PC-3 (cell line): ENCODE measurements at regions of chr3 and their contacts with region 1.

Region 1: GRCh38 chr3:9932843-9933560 is 632 bp upstream of the CRELD1 start:
- DNase-seq: peak; percentile 84
- ATAC-seq: peak; percentile 71
- H3K4me3 ChIP-seq: peak overlapping the region; percentile 72
- H3K27ac ChIP-seq: peak overlapping the region; percentile 84
- H3K4me1 ChIP-seq: peaks cover 33% of the 10 kb centered on the region
- H3K27me3 ChIP-seq: no peaks in the 10 kb centered on the region
- CTCF ChIP-seq: peak; percentile 84

Region 2: GRCh38 chr3:9897408-9898372 is 35.3 kb before region 1 on chr3:
- CTCF ChIA-PET with region 1: interaction called, 8 read pairs
- POLR2A ChIA-PET with region 1: interaction called, 8 read pairs
- intact Hi-C with region 1: loop called (anchors 2 kb)
- DNase-seq: peak; percentile 99
- ATAC-seq: peak; percentile 85
- H3K4me3 ChIP-seq: peak overlapping the region; percentile 46
- H3K27ac ChIP-seq: peak overlapping the region; percentile 93
- H3K4me1 ChIP-seq: peaks cover 57% of the 10 kb centered on the region
- H3K27me3 ChIP-seq: no peaks in the 10 kb centered on the region
- CTCF ChIP-seq: no peak

Region 3: DNA sequence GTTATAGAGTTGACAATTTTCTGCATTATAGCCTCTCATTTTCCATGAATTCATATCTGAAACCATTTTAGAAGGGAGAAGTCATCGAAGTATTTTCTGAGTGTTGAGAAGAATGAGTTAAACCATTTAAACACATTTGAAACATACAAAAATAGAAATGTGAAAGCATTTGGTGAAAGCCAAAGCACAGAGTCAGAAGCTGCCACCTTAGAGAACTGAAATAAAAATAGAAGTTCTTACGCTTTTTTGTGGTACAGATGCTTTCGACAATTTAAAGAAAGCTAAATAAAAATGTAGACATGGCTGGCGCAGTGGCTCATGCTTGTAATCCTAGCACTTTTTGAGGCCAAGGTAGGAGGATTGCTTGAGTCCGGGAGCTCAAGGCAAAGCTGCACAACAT is 166.0 kb after region 1 on chr3:
- CTCF ChIA-PET with region 1: no interaction called
- POLR2A ChIA-PET with region 1: no interaction called
- intact Hi-C with region 1: no loop called
- DNase-seq: no peak
- ATAC-seq: no peak
- H3K4me3 ChIP-seq: no peak overlapping the region
- H3K27ac ChIP-seq: no peak overlapping the region
- H3K4me1 ChIP-seq: no peaks in the 10 kb centered on the region
- H3K27me3 ChIP-seq: no peaks in the 10 kb centered on the region
- CTCF ChIP-seq: no peak